ENCODE measurements at regions of chr18 and their contacts with region 1.

Region 1: GRCh38 chr18:75607701-75608100 is 180.2 kb upstream of the SMIM21 start:
- DNase-seq: no peak
- ATAC-seq: no peak
- H3K4me3 ChIP-seq: no peak overlapping the region
- H3K4me3 Mint-ChIP-seq: no peak overlapping the region
- H3K27ac ChIP-seq: no peak overlapping the region
- H3K27ac Mint-ChIP-seq: no peak overlapping the region
- H3K4me1 ChIP-seq: no peaks in the 10 kb centered on the region
- H3K4me1 Mint-ChIP-seq: peaks cover 0 to 1% (median 0%) of the 10 kb centered on the region in 7 donors
- H3K27me3 ChIP-seq: no peaks in the 10 kb centered on the region
- H3K27me3 Mint-ChIP-seq: peaks cover 0 to 30% (median 9%) of the 10 kb centered on the region in 5 donors

Region 2: DNA sequence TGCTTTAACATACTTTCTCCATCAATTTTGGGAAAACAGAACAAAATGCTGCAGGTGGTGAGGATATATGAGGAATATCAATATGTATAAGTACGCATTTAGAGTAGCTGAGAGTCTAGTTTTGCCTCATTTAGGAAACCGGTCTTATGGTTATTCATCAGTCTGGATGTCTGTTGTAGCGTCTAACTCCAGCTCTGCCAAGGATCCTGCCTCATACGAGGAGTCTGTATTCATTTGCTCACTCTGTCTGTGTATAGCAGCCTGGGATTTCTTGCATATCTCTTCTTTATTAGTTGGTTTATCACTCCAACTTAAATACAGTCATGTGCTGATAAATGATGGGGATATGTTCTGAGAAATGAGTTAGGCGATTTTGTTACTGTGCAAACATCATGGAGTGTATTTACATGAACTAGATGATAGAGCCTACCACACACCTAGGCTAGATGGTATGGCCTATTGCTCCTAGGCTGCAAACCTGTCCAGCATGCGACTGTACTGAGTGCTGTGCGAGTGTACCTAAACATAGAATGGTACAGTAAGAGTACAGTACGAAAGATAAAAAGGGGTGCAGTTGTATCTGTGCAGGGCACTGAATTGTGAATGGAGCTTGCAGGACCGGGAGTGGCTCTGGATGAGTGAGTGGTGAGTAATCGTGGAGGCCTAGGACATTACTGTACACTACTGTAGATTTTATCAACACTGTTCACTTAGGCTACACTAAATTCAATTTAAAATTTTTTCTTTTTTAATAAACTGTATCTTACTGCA is 861.9 kb before region 1 on chr18:
- CTCF ChIA-PET with region 1: no interaction called
- POLR2A ChIA-PET with region 1: no interaction called
- intact Hi-C with region 1: no loop called
- DNase-seq: no peak
- ATAC-seq: no peak
- H3K4me3 ChIP-seq: no peak overlapping the region
- H3K4me3 Mint-ChIP-seq: no peak overlapping the region
- H3K27ac ChIP-seq: no peak overlapping the region
- H3K27ac Mint-ChIP-seq: no peak overlapping the region
- H3K4me1 ChIP-seq: no peaks in the 10 kb centered on the region
- H3K4me1 Mint-ChIP-seq: peaks cover 0 to 10% (median 0%) of the 10 kb centered on the region in 7 donors
- H3K27me3 ChIP-seq: no peaks in the 10 kb centered on the region
- H3K27me3 Mint-ChIP-seq: no peaks in the 10 kb centered on the region

Region 3: DNA sequence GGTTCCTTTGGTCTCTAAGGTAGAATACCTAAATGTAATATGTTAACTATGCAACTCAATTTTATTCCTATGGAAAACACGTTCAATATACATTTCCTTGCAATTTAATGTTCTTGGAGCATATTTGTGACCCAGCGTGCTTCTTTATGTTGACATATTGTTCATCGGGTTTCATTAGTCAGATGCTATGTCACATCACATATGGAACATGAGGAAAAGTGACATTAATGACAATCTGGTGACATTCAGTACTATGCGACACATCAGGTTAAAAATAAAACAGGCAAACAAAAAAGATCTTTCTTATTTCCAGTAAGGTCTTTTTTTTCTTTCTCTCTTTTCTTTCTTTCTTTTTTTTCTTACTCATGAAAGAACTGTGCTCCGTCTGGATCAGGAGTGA is 44.6 kb before region 1 on chr18:
- CTCF ChIA-PET with region 1: no interaction called
- POLR2A ChIA-PET with region 1: no interaction called
- intact Hi-C with region 1: loop called in 1 of 2 experiments (anchors 1 kb)
- DNase-seq: no peak
- ATAC-seq: no peak
- H3K4me3 ChIP-seq: no peak overlapping the region
- H3K4me3 Mint-ChIP-seq: no peak overlapping the region
- H3K27ac ChIP-seq: no peak overlapping the region
- H3K27ac Mint-ChIP-seq: no peak overlapping the region
- H3K4me1 ChIP-seq: no peaks in the 10 kb centered on the region
- H3K4me1 Mint-ChIP-seq: no peaks in the 10 kb centered on the region
- H3K27me3 ChIP-seq: no peaks in the 10 kb centered on the region
- H3K27me3 Mint-ChIP-seq: peaks cover 0 to 30% (median 17%) of the 10 kb centered on the region in 5 donors

Region 4: DNA sequence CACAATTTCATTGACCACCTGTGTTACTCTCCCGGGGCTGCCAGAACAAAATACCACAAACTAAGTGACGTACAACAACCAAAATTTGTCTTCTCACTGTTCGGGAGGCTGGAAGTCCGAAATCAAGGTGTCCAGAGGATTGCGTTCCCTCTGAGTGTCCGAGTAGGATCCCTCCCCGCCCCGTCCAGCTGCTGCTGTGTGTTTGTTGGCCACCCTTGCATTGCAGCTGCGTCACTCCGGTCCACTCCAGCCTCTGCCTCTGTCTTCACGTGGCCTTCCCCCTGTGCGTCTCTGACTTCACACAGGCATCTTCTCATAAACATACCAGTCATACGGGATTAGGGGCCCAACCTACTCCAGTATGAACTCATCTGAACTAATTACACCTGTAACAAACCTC is 71.6 kb after region 1 on chr18:
- CTCF ChIA-PET with region 1: no interaction called
- POLR2A ChIA-PET with region 1: no interaction called
- intact Hi-C with region 1: no loop called
- DNase-seq: no peak
- ATAC-seq: no peak
- H3K4me3 ChIP-seq: no peak overlapping the region
- H3K4me3 Mint-ChIP-seq: no peak overlapping the region
- H3K27ac ChIP-seq: no peak overlapping the region
- H3K27ac Mint-ChIP-seq: no peak overlapping the region
- H3K4me1 ChIP-seq: no peaks in the 10 kb centered on the region
- H3K4me1 Mint-ChIP-seq: no peaks in the 10 kb centered on the region
- H3K27me3 ChIP-seq: no peaks in the 10 kb centered on the region
- H3K27me3 Mint-ChIP-seq: peaks cover 0 to 46% (median 23%) of the 10 kb centered on the region in 5 donors

Measured in naive thymus-derived CD4-positive, alpha-beta T cell (primary cell).